PC-3 (cell line): ENCODE measurements at regions of chr5 and their contacts with region 1.

Region 1: GRCh38 chr5:74631081-74631953 is 9.2 kb downstream of the ENC1 start:
- DNase-seq: peak; percentile 83
- ATAC-seq: peak; percentile 58
- H3K4me3 ChIP-seq: peak overlapping the region; percentile 55
- H3K27ac ChIP-seq: peak overlapping the region; percentile 94
- H3K4me1 ChIP-seq: peaks cover 66% of the 10 kb centered on the region
- H3K27me3 ChIP-seq: no peaks in the 10 kb centered on the region
- CTCF ChIP-seq: no peak

Region 2: GRCh38 chr5:74326571-74327338 is 304.6 kb before region 1 on chr5:
- CTCF ChIA-PET with region 1: no interaction called
- POLR2A ChIA-PET with region 1: no interaction called
- intact Hi-C with region 1: loop called (anchors 2 kb)
- DNase-seq: peak; percentile 92
- ATAC-seq: peak; percentile 74
- H3K4me3 ChIP-seq: no peak overlapping the region; the same call in 1 of the 2 replicates
- H3K27ac ChIP-seq: peak overlapping the region; percentile 70
- H3K4me1 ChIP-seq: peaks cover 27% of the 10 kb centered on the region
- H3K27me3 ChIP-seq: no peaks in the 10 kb centered on the region
- CTCF ChIP-seq: no peak

Region 3: DNA sequence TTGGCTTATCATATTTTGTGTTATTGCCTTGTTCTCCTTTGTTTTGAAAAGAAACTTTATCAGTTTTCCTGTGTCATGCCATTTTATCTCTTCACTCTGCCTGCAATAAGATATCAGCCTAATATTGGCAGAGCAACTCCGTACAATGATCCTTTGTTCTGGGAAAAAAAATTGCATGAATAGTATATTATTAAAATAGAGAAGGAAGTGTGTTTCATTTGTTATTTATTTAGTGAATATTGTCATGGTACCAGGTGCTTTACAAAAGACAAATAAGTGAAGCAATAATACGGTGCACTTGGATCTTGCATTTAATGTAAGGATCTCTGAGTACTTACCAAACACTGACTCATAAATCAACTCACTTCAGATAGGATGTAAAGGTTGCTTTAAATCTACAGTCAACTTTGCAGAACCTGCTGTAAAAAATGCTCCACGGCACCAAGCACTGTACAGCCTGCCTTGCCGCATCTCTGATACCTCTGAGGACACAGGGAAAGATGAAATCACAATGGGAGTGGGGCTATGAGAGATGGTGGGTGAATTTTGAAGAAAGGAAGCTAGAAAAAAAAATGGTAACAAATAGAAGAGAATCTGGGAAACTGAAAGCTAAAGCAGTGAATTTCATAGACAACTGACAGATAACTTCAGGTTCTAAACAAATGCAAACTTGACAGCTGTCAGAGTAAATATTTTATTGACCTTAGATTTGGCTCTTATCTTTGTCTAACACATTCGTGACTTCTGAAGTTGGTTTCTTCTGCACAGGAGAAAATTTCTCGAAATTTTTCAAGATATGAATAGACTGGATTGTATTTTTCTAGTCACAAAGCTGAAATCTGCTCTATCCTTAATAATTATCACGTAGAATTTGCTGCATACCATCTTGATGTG is 222.9 kb before region 1 on chr5:
- CTCF ChIA-PET with region 1: no interaction called
- POLR2A ChIA-PET with region 1: no interaction called
- intact Hi-C with region 1: loop called (anchors 1 kb)
- DNase-seq: peak; percentile 88
- ATAC-seq: peak; percentile 98
- H3K4me3 ChIP-seq: peak overlapping the region; percentile 36; the same call in 1 of the 2 replicates
- H3K27ac ChIP-seq: peak overlapping the region; percentile 58
- H3K4me1 ChIP-seq: peaks cover 18% of the 10 kb centered on the region
- H3K27me3 ChIP-seq: no peaks in the 10 kb centered on the region
- CTCF ChIP-seq: no peak

Region 4: GRCh38 chr5:74543156-74543995 is 87.9 kb before region 1 on chr5:
- CTCF ChIA-PET with region 1: no interaction called
- POLR2A ChIA-PET with region 1: interaction called, 3 read pairs
- intact Hi-C with region 1: loop called (anchors 1 kb)
- DNase-seq: peak; percentile 92
- ATAC-seq: peak; percentile 85
- H3K4me3 ChIP-seq: peak overlapping the region; percentile 49
- H3K27ac ChIP-seq: peak overlapping the region; percentile 94
- H3K4me1 ChIP-seq: peaks cover 52% of the 10 kb centered on the region
- H3K27me3 ChIP-seq: no peaks in the 10 kb centered on the region
- CTCF ChIP-seq: no peak

Region 5: DNA sequence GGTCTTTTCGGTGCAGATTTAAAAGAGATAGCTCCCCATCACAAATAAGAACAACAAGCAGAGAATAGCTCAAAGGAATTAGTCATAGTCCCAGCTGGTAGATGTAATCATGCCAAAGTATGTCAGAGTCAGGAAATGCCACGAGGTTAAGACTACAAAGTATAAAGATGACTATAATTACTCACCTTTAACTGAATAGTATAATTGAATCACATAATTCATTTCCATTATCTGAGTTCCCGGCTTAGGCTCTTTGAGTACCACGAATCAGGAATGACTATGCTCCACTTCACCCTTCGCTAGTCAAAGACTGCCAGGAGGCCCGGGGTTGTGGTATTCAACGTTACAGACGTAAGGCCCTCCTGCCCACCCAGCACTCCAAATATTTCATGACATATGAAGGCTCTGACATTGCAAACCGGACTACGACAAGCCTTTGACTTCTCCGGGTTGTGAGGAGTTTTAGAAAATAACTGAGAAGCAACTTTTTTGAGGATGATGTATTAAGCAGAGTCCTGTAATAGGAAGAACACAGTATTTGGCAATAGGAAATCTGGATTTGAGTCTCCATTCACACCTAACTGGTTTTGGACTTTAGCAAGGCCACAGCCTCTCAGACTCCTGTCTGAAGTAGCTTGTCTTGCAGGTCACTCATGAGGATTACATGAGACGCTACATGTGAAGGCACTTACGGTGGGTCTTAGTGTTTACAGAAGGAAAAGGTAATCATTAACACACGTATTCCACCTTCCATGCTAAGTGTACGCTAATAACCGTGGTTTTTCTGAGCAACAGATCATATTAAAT is 55.4 kb before region 1 on chr5:
- CTCF ChIA-PET with region 1: no interaction called
- POLR2A ChIA-PET with region 1: interaction called, 3 read pairs
- intact Hi-C with region 1: loop called (anchors 2 kb)
- DNase-seq: peak; percentile 86
- ATAC-seq: peak; percentile 95
- H3K4me3 ChIP-seq: no peak overlapping the region
- H3K27ac ChIP-seq: peak overlapping the region; percentile 42
- H3K4me1 ChIP-seq: peaks cover 22% of the 10 kb centered on the region
- H3K27me3 ChIP-seq: no peaks in the 10 kb centered on the region
- CTCF ChIP-seq: no peak